H1 (cell line): ENCODE measurements at regions of chr10 and their contacts with region 1.

Region 1: DNA sequence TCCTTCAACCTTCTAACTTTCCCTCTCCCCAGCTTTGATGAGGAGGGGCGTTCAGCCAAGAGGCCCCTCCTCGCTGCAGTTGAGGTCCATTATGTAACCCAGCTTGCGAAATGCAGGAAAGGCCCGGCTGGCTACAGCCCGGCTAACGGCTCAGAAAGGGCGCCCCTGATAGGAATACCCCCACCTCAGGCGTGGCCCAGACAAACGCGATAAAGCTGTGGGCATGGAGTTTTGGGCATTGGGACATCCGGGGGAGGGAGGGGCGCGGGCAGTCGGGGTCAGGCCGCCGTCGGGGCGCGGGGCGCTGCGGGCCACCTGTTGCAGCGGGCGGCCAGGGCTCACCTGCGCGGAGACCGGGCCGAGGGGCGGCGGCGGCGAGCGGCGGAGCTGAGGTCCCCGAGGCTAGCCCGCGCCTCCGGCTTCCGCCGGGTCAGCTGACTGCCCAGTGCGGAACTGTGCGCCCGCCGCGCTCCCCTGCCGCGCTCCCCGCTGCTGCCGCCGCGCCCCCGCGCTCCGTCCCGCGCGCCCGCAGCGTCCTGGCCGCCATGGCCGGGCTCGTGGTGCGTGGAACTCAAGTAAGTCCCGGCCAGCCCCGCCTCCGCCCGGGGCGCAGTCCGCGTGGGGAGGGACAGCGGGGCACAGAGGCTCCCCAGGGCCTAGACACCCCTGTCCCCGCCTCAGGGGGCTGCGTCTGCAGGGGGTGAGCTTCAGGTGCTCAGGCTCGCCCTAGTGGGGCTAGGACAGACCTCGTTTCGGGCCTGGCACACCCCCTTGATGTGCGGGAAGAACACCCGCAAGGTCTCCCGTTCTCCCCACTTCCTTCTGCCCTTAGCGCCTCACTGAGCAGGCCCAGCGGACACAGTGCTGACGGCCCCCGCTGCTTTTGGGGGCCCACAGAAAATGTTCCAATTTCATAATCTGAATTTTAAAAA is at the start of gene LRMDA:
- DNase-seq: peak in 1 of 2 experiments; percentile 61
- H3K4me3 ChIP-seq: peak within 1 kb of the TSS; percentile 22 to 57 (median 33); a peak in 7 of 8 replicates
- H3K27ac ChIP-seq: no peak within 1 kb of the TSS
- H3K4me1 ChIP-seq: peaks cover 5 to 13% (median 8%) of the 10 kb centered on the region in 4 experiments
- H3K27me3 ChIP-seq: peaks cover 51 to 88% (median 81%) of the 10 kb centered on the region in 4 experiments
- CTCF ChIP-seq: no peak
- EP300 ChIP-seq: no peak
- POLR2A ChIP-seq: no peak
- RAD21 ChIP-seq: no peak
- total RNA-seq, gene LRMDA: 0.86 and 2.4 TPM in 2 replicates

Region 2: GRCh38 chr10:75593692-75594556 is 162.5 kb after region 1 on chr10:
- CTCF ChIA-PET with region 1: interaction called, 16 read pairs
- POLR2A ChIA-PET with region 1: no interaction called
- DNase-seq: peak in 1 of 2 experiments; percentile 66
- H3K4me3 ChIP-seq: no peak overlapping the region
- H3K27ac ChIP-seq: no peak overlapping the region
- H3K4me1 ChIP-seq: peaks cover 2 to 9% (median 6%) of the 10 kb centered on the region in 4 experiments; a peak in 5 of 7 replicates
- H3K27me3 ChIP-seq: peaks cover 5 to 14% (median 10%) of the 10 kb centered on the region in 4 experiments; a peak in 6 of 7 replicates
- CTCF ChIP-seq: peak; percentile 73 to 92 (median 89)
- EP300 ChIP-seq: no peak
- POLR2A ChIP-seq: no peak
- RAD21 ChIP-seq: peak; percentile 74 to 79